ENCODE measurements at regions of chr2 and their contacts with region 1.

Region 1: GRCh38 chr2:86079981-86080911 is 25.4 kb downstream of the POLR1A start:
- DNase-seq: peak; percentile 74
- H3K4me3 Mint-ChIP-seq: no peak overlapping the region
- H3K27ac Mint-ChIP-seq: no peak overlapping the region
- H3K4me1 Mint-ChIP-seq: peaks cover 40% of the 10 kb centered on the region
- H3K27me3 Mint-ChIP-seq: no peaks in the 10 kb centered on the region

Region 2: GRCh38 chr2:85826990-85827878 is 253.0 kb before region 1 on chr2:
- intact Hi-C with region 1: loop called (anchors 1 kb)
- DNase-seq: peak; percentile 75
- H3K4me3 Mint-ChIP-seq: no peak overlapping the region
- H3K27ac Mint-ChIP-seq: no peak overlapping the region
- H3K4me1 Mint-ChIP-seq: peaks cover 32% of the 10 kb centered on the region
- H3K27me3 Mint-ChIP-seq: peaks cover 29% of the 10 kb centered on the region

Measured in activated T-helper 2 cell treated with anti-CD3 and anti-CD28 coated beads, Interferon-gamma antibody, Interleukin-2, Interleukin-4, amounts not matched to agents 10 μg/mL and 5 μg/mL and 100 μg/mL, durations not matched to agents 14 hours and 24 hours and 36 hours (primary cell).